ENCODE measurements at regions of chr11 and their contacts with region 1.

Region 1: GRCh38 chr11:14342906-14343305 is 16.1 kb downstream of the RRAS2 start:
- DNase-seq: no peak
- ATAC-seq: no peak
- H3K4me3 ChIP-seq: no peak overlapping the region
- H3K27ac ChIP-seq: no peak overlapping the region
- H3K4me1 ChIP-seq: 0 out of 2 replicates have a peak, but pooled peaks cover 2% of the 10 kb centered on the region
- H3K27me3 ChIP-seq: no peaks in the 10 kb centered on the region
- CTCF ChIP-seq: no peak

Region 2: DNA sequence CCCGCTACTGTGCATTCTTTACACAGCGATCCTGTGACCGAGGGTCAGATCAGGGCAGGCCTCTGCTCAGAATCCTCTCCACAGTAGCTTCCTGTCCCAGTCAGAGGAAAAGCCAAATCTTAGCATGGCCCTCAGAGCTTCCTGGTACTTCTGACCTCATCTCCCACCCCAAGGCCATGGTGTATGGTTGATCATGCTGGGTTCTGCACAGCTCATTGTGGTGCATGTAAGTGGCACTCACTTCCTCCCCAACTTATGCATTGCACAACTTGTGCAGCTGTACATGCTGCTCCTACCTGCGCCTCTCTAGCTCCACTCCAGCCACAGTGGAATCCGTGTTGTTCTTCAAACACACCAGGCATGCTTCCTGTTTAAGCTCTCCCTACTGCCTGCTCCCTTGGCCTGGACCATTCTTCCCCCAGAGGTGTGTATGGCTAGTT is 1045.0 kb before region 1 on chr11:
- CTCF ChIA-PET with region 1: no interaction called
- POLR2A ChIA-PET with region 1: no interaction called
- in situ Hi-C with region 1: no loop called
- intact Hi-C with region 1: no loop called
- DNase-seq: no peak
- ATAC-seq: no peak
- H3K4me3 ChIP-seq: no peak overlapping the region
- H3K27ac ChIP-seq: no peak overlapping the region
- H3K4me1 ChIP-seq: no peaks in the 10 kb centered on the region
- H3K27me3 ChIP-seq: no peaks in the 10 kb centered on the region
- CTCF ChIP-seq: no peak

Region 3: GRCh38 chr11:14331476-14332136 is 11.3 kb before region 1 on chr11:
- CTCF ChIA-PET with region 1: interaction called, 14 read pairs
- POLR2A ChIA-PET with region 1: no interaction called
- in situ Hi-C with region 1: no loop called
- intact Hi-C with region 1: no loop called
- DNase-seq: no peak
- ATAC-seq: no peak
- H3K4me3 ChIP-seq: no peak overlapping the region
- H3K27ac ChIP-seq: no peak overlapping the region
- H3K4me1 ChIP-seq: peaks cover 4% of the 10 kb centered on the region; the same call in 1 of the 2 replicates
- H3K27me3 ChIP-seq: no peaks in the 10 kb centered on the region
- CTCF ChIP-seq: no peak

Measured in Panc1 (cell line).